ENCODE measurements at regions of chr16 and their contacts with region 1.

Region 1: GRCh38 chr16:27066668-27067537 is at the start of gene C16orf82:
- DNase-seq: no peak
- H3K4me3 Mint-ChIP-seq: no peak within 1 kb of the TSS
- H3K27ac Mint-ChIP-seq: no peak within 1 kb of the TSS
- H3K4me1 Mint-ChIP-seq: no peaks in the 10 kb centered on the region
- H3K27me3 Mint-ChIP-seq: peaks cover 93% of the 10 kb centered on the region
- CTCF ChIP-seq: no peak
- total RNA-seq, gene C16orf82: not detected in 2 replicates

Region 2: DNA sequence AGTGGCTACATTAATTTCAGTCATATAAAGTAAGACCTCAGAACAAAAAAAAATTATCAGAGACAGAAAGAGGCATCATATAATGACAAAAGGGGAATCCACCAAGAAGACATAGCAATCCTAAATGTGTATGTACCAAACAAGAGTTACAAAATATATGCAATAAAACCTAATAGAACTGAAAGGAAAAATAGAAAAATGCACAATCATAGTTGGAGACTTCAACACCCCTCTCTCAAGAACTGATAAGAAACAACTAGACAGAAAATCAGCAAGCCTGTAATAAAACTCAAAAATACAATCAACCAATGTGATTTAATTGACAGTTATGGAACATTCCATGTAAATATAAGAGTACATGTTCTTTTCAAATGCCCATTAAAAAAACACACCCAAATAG is 61.5 kb before region 1 on chr16:
- CTCF ChIA-PET with region 1: no interaction called
- intact Hi-C with region 1: loop called (anchors 10 kb)
- DNase-seq: no peak
- H3K4me3 Mint-ChIP-seq: no peak overlapping the region
- H3K27ac Mint-ChIP-seq: no peak overlapping the region
- H3K4me1 Mint-ChIP-seq: no peaks in the 10 kb centered on the region
- H3K27me3 Mint-ChIP-seq: peaks cover 46% of the 10 kb centered on the region
- CTCF ChIP-seq: no peak

Measured in Calu3 (cell line).